ENCODE measurements at regions of chr15 and their contacts with region 1.

Region 1: GRCh38 chr15:74019734-74020133 is 25.2 kb downstream of the PML start:
- DNase-seq: no peak
- ATAC-seq: no peak
- H3K4me3 ChIP-seq: no peak overlapping the region
- H3K4me3 Mint-ChIP-seq: no peak overlapping the region
- H3K27ac ChIP-seq: no peak overlapping the region
- H3K27ac Mint-ChIP-seq: peak overlapping the region in 1 of 9 donors; percentile 7
- H3K4me1 ChIP-seq: peaks cover 0 to 3% of the 10 kb centered on the region in 2 donors
- H3K4me1 Mint-ChIP-seq: peaks cover 15 to 29% (median 27%) of the 10 kb centered on the region in 7 donors
- H3K27me3 ChIP-seq: no peaks in the 10 kb centered on the region
- H3K27me3 Mint-ChIP-seq: no peaks in the 10 kb centered on the region

Region 2: DNA sequence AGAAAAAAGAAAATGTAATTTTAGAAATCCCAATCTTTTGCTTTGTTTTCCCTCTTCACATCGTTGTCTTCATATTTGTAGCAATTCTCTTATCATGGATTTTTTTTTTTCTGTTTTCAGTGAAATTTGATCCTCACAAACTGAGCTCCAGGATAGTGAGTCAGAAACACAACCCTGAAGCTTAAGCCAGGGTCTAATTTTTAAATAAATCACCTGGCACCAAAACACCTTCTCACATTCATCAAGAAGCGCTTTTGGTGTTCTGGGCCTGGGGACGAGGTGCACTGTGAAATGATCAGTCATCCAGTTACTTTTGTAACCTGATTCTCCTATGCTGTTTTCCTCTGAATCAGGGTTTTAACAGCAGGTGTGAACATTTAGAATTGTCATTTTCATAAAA is 489.1 kb before region 1 on chr15:
- CTCF ChIA-PET with region 1: no interaction called
- POLR2A ChIA-PET with region 1: no interaction called
- intact Hi-C with region 1: no loop called
- DNase-seq: no peak
- ATAC-seq: no peak
- H3K4me3 ChIP-seq: no peak overlapping the region
- H3K4me3 Mint-ChIP-seq: no peak overlapping the region
- H3K27ac ChIP-seq: no peak overlapping the region
- H3K27ac Mint-ChIP-seq: no peak overlapping the region
- H3K4me1 ChIP-seq: no peaks in the 10 kb centered on the region
- H3K4me1 Mint-ChIP-seq: no peaks in the 10 kb centered on the region
- H3K27me3 ChIP-seq: no peaks in the 10 kb centered on the region
- H3K27me3 Mint-ChIP-seq: peaks cover 0 to 21% (median 0%) of the 10 kb centered on the region in 5 donors

Region 3: DNA sequence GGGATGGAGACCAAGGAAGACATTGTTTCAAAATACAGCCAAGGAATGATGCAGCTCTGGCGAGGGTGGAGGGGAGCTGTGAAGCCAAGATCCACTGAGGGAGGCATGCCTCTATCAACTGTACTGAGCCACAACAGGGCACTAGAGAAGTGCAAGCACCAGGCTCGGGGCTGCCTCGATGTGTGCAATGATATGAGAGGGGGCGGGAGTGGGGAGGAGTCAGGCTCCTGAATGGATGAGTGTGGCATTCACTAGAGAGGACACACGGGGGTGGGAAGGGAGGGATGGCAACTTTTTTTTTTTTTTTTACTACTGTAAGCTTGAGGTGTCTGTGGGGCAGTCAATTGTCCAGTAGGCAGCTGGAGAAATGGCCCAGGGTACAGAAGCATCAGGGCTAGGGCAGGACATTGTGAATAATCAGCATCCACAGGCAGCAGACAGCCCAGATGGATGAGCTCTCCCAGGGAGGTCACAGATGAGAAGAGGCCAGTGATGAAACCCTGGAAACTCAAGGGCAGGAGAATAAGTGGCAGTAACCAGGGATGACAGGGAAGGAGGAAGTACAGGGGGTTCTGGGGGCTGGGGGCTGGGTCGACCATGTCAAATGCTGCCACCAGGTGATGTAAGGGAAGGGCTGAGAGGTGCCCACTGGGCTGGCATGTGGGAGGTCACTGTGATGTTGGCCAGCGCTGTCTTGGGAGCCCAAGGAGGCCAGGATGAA is 33.5 kb before region 1 on chr15:
- CTCF ChIA-PET with region 1: no interaction called
- POLR2A ChIA-PET with region 1: no interaction called
- intact Hi-C with region 1: no loop called
- DNase-seq: no peak
- ATAC-seq: no peak
- H3K4me3 ChIP-seq: no peak overlapping the region
- H3K4me3 Mint-ChIP-seq: peak overlapping the region in 1 of 10 donors; percentile 27
- H3K27ac ChIP-seq: no peak overlapping the region
- H3K27ac Mint-ChIP-seq: peak overlapping the region in 5 of 9 donors; percentile 1 to 83 (median 78)
- H3K4me1 ChIP-seq: peaks cover 0 to 21% of the 10 kb centered on the region in 2 donors
- H3K4me1 Mint-ChIP-seq: peaks cover 0 to 76% (median 34%) of the 10 kb centered on the region in 7 donors
- H3K27me3 ChIP-seq: no peaks in the 10 kb centered on the region
- H3K27me3 Mint-ChIP-seq: no peaks in the 10 kb centered on the region

Region 4: DNA sequence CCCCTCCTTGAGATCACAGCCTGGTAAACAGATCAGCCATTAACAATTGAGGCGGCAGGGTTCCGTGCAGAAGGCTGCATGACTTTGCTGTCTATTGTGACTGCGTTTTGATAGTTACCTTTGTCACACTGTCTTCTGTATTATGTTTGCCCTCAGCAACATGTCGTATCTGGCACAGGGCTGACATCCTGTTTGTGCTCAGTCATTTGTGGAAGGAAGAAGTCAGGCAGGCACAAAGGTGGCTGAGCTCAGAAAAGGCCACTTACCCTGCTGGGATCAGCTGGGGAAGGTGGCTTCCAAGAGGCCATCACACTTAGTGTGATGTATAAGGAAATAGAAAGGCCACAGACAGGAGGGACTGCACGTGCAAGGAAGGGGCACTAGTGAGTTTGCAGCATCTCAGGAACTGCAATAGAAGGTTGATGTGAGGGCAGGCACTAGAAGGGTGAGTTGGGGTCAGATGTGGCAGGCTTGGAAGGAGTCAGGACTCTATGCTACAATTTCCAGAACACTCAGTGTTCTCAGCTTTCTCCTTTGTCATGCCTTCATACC is 11.8 kb before region 1 on chr15:
- CTCF ChIA-PET with region 1: interaction called, 3 read pairs
- POLR2A ChIA-PET with region 1: interaction called, 3 read pairs
- intact Hi-C with region 1: loop called in 1 of 2 experiments (anchors 2 kb)
- DNase-seq: peak in 6 of 9 donors; percentile 24 to 54 (median 44)
- ATAC-seq: peak; percentile 67
- H3K4me3 ChIP-seq: no peak overlapping the region
- H3K4me3 Mint-ChIP-seq: peak overlapping the region; percentile 58 to 88 (median 72)
- H3K27ac ChIP-seq: peak overlapping the region; percentile 56
- H3K27ac Mint-ChIP-seq: peak overlapping the region; percentile 82 to 97 (median 88)
- H3K4me1 ChIP-seq: peaks cover 11 to 35% of the 10 kb centered on the region in 2 donors
- H3K4me1 Mint-ChIP-seq: peaks cover 37 to 78% (median 73%) of the 10 kb centered on the region in 7 donors
- H3K27me3 ChIP-seq: no peaks in the 10 kb centered on the region
- H3K27me3 Mint-ChIP-seq: no peaks in the 10 kb centered on the region

Region 5: GRCh38 chr15:74036271-74037170 is 16.8 kb after region 1 on chr15:
- CTCF ChIA-PET with region 1: no interaction called
- POLR2A ChIA-PET with region 1: no interaction called
- intact Hi-C with region 1: no loop called
- DNase-seq: no peak
- ATAC-seq: no peak
- H3K4me3 ChIP-seq: no peak overlapping the region
- H3K4me3 Mint-ChIP-seq: no peak overlapping the region
- H3K27ac ChIP-seq: no peak overlapping the region
- H3K27ac Mint-ChIP-seq: peak overlapping the region in 4 of 9 donors; percentile 14 to 82 (median 56)
- H3K4me1 ChIP-seq: no peaks in the 10 kb centered on the region
- H3K4me1 Mint-ChIP-seq: peaks cover 0 to 4% (median 0%) of the 10 kb centered on the region in 7 donors
- H3K27me3 ChIP-seq: no peaks in the 10 kb centered on the region
- H3K27me3 Mint-ChIP-seq: no peaks in the 10 kb centered on the region

Measured in naive thymus-derived CD4-positive, alpha-beta T cell (primary cell).